ENCODE measurements at regions of chr17 and their contacts with region 1.

Region 1: GRCh38 chr17:58692239-58693055 is at the start of gene RAD51C:
- DNase-seq: peak; percentile 90
- ATAC-seq: peak; percentile 98
- H3K4me3 Mint-ChIP-seq: peak within 1 kb of the TSS; percentile 95
- H3K27ac Mint-ChIP-seq: peak within 1 kb of the TSS; percentile 96
- H3K4me1 Mint-ChIP-seq: peaks cover 24% of the 10 kb centered on the region
- H3K27me3 Mint-ChIP-seq: peaks cover 4% of the 10 kb centered on the region
- total RNA-seq, gene RAD51C: 40.0 to 45.7 TPM

Region 2: GRCh38 chr17:58658804-58659713 is 33.4 kb before region 1 on chr17:
- POLR2A ChIA-PET with region 1: interaction called, 22 read pairs
- DNase-seq: peak; percentile 56
- ATAC-seq: peak; percentile 83
- H3K4me3 Mint-ChIP-seq: peak overlapping the region; percentile 72
- H3K27ac Mint-ChIP-seq: peak overlapping the region; percentile 96
- H3K4me1 Mint-ChIP-seq: peaks cover 16% of the 10 kb centered on the region
- H3K27me3 Mint-ChIP-seq: peaks cover 8% of the 10 kb centered on the region